ENCODE measurements at regions of chr9 and their contacts with region 1.

Region 1: GRCh38 chr9:92138157-92138959 is 23.1 kb upstream of the SPTLC1 start:
- DNase-seq: peak; percentile 51
- H3K4me3 ChIP-seq: no peak overlapping the region
- H3K27ac ChIP-seq: no peak overlapping the region
- H3K4me1 ChIP-seq: peaks cover 3% of the 10 kb centered on the region
- H3K27me3 ChIP-seq: no peaks in the 10 kb centered on the region
- CTCF ChIP-seq: peak; percentile 60 to 90 (median 82)
- POLR2A ChIP-seq: no peak

Region 2: GRCh38 chr9:91948597-91949373 is 189.6 kb before region 1 on chr9:
- intact Hi-C with region 1: no loop called
- DNase-seq: peak; percentile 81
- H3K4me3 ChIP-seq: peak overlapping the region; percentile 69 to 83
- H3K27ac ChIP-seq: peak overlapping the region; percentile 95 to 96
- H3K4me1 ChIP-seq: peaks cover 7% of the 10 kb centered on the region
- H3K27me3 ChIP-seq: no peaks in the 10 kb centered on the region
- CTCF ChIP-seq: peak; percentile 3 to 63 (median 42)
- POLR2A ChIP-seq: peak; percentile 52

Region 3: GRCh38 chr9:92242260-92243136 is 104.1 kb after region 1 on chr9:
- intact Hi-C with region 1: loop called (anchors 5 kb)
- DNase-seq: no peak
- H3K4me3 ChIP-seq: no peak overlapping the region
- H3K27ac ChIP-seq: no peak overlapping the region
- H3K4me1 ChIP-seq: no peaks in the 10 kb centered on the region
- H3K27me3 ChIP-seq: no peaks in the 10 kb centered on the region
- CTCF ChIP-seq: peak in 2 of 4 experiments; percentile 20 to 46
- POLR2A ChIP-seq: no peak